Ascending aorta (tissue), 2 donors: ENCODE measurements at regions of chr10 and their contacts with region 1.

Region 1: GRCh38 chr10:102432162-102432950 is at the start of gene CUEDC2:
- DNase-seq: peak; percentile 84 to 98
- H3K4me3 ChIP-seq: peak within 1 kb of the TSS; percentile 92 to 98
- H3K27ac ChIP-seq: peak within 1 kb of the TSS; percentile 79
- H3K4me1 ChIP-seq: peaks cover 8 to 14% of the 10 kb centered on the region in 2 donors
- H3K27me3 ChIP-seq: no peaks in the 10 kb centered on the region
- CTCF ChIP-seq: no peak
- total RNA-seq, gene CUEDC2: 45.1 TPM

Region 2: GRCh38 chr10:102175415-102175814 is 256.9 kb before region 1 on chr10:
- intact Hi-C with region 1: no loop called
- DNase-seq: no peak
- H3K4me3 ChIP-seq: no peak overlapping the region
- H3K27ac ChIP-seq: no peak overlapping the region
- H3K4me1 ChIP-seq: no peaks in the 10 kb centered on the region
- H3K27me3 ChIP-seq: no peaks in the 10 kb centered on the region
- CTCF ChIP-seq: no peak

Region 3: GRCh38 chr10:102322914-102323313 is 109.4 kb before region 1 on chr10:
- intact Hi-C with region 1: no loop called
- DNase-seq: no peak
- H3K4me3 ChIP-seq: no peak overlapping the region
- H3K27ac ChIP-seq: no peak overlapping the region
- H3K4me1 ChIP-seq: no peaks in the 10 kb centered on the region
- H3K27me3 ChIP-seq: no peaks in the 10 kb centered on the region
- CTCF ChIP-seq: no peak

Region 4: DNA sequence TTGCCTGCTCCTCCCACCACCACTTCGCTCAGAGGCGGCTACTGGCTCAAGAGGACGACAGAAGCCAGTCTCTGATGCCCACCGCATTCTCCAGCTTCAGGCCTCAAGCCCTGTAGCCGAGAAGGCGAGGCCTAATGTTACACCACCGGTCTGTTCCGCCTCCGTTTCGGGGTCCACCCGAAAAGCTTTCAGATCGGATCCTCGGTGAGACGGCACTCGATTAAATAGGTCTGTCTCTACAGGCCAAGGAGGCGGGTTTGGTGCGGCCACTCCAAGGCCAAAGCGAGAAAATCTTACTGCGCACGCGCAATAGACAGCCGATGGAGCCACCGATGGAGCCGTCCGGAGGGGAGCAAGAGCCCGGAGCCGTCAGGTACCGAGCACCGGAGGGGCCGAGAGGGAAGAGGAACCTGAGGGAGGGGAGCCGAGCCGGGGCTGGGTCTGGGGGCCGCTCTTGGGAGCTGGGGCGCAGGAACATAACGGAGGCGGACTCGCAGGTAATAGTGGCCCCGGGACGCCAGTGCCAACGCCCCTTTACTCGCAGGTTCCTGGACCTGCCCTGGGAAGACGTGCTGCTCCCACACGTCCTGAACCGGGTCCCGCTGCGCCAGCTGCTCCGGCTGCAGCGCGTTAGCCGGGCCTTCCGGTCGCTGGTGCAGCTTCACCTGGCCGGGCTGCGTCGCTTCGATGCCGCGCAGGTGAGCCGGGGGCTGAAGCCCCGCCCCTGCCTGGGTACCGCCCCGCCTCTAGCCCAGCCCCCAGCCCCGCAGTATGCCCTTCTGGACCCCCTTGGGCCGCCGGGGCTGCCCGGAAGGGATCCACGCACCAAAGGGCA is 11.3 kb before region 1 on chr10 and contains the start of gene FBXL15:
- intact Hi-C with region 1: loop called (anchors 1 kb)
- DNase-seq: peak; percentile 85 to 99
- H3K4me3 ChIP-seq: peak within 1 kb of the TSS; percentile 92 to 93
- H3K27ac ChIP-seq: peak within 1 kb of the TSS; percentile 85 to 86
- H3K4me1 ChIP-seq: peaks cover 16 to 27% of the 10 kb centered on the region in 2 donors
- H3K27me3 ChIP-seq: peaks cover 13% of the 10 kb centered on the region
- CTCF ChIP-seq: no peak
- total RNA-seq, gene FBXL15: 16.5 TPM

Region 5: GRCh38 chr10:102450194-102450938 is 18.0 kb after region 1 on chr10:
- intact Hi-C with region 1: loop called (anchors 1 kb)
- DNase-seq: peak in 1 of 2 donors; percentile 89
- H3K4me3 ChIP-seq: peak overlapping the region; percentile 89 to 94
- H3K27ac ChIP-seq: peak overlapping the region; percentile 77 to 87
- H3K4me1 ChIP-seq: peaks cover 5 to 12% of the 10 kb centered on the region in 2 donors
- H3K27me3 ChIP-seq: no peaks in the 10 kb centered on the region
- CTCF ChIP-seq: peak in 1 of 3 experiments; percentile 13